ENCODE measurements at regions of chr4 and their contacts with region 1.

Region 1: GRCh38 chr4:37960679-37961450 is 667 bp downstream of the PTTG2 start:
- DNase-seq: no peak
- ATAC-seq: no peak
- H3K4me3 ChIP-seq: no peak overlapping the region
- H3K4me3 Mint-ChIP-seq: no peak overlapping the region
- H3K27ac ChIP-seq: no peak overlapping the region
- H3K27ac Mint-ChIP-seq: no peak overlapping the region
- H3K4me1 ChIP-seq: no peaks in the 10 kb centered on the region
- H3K4me1 Mint-ChIP-seq: no peaks in the 10 kb centered on the region
- H3K27me3 ChIP-seq: no peaks in the 10 kb centered on the region
- H3K27me3 Mint-ChIP-seq: no peaks in the 10 kb centered on the region
- CTCF ChIP-seq: no peak

Region 2: GRCh38 chr4:37995966-37996365 is 35.1 kb after region 1 on chr4:
- CTCF ChIA-PET with region 1: no interaction called
- POLR2A ChIA-PET with region 1: no interaction called
- intact Hi-C with region 1: loop called in 1 of 2 experiments (anchors 1 kb)
- DNase-seq: no peak
- ATAC-seq: no peak
- H3K4me3 ChIP-seq: no peak overlapping the region
- H3K4me3 Mint-ChIP-seq: no peak overlapping the region
- H3K27ac ChIP-seq: no peak overlapping the region
- H3K27ac Mint-ChIP-seq: no peak overlapping the region
- H3K4me1 ChIP-seq: peaks cover 3% of the 10 kb centered on the region
- H3K4me1 Mint-ChIP-seq: peaks cover 62% of the 10 kb centered on the region
- H3K27me3 ChIP-seq: no peaks in the 10 kb centered on the region
- H3K27me3 Mint-ChIP-seq: no peaks in the 10 kb centered on the region
- CTCF ChIP-seq: no peak